Endothelial cell of umbilical vein (primary cell): ENCODE measurements at regions of chr12 and their contacts with region 1.

Region 1: DNA sequence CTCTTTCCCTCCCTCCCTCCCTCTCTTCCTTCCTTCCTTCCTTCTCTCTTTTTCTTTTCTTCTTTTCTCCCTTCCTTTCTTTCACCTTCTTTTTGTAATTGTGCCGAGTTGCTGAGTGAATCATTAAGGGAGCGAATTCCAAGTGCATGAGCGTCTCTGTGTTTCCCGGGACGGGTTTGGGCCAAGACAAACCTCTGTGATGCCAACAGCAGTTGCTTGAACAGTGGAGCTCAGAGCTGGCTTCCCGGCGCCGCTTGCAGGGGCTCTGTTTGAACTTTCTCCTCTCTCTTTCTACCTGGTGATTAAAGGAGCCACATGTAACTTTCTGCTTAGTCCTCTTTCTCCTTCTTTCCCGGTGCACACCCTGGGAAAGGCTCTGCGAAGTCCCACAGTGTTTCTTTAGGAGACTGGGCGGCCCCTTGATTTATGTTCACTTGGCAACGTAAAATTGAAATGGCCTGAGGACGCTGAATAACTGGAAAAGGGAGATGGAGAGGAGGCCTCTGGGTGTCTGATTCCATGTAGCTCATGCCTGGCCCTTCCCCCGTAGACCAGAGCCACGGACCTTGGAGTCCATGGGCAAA is 33.7 kb upstream of the MAP1LC3B2 start:
- DNase-seq: peak; percentile 74
- H3K4me3 ChIP-seq: no peak overlapping the region
- H3K27ac ChIP-seq: peak overlapping the region; percentile 68
- H3K4me1 ChIP-seq: peaks cover 22% of the 10 kb centered on the region
- H3K27me3 ChIP-seq: no peaks in the 10 kb centered on the region
- CTCF ChIP-seq: no peak
- POLR2A ChIP-seq: no peak

Region 2: GRCh38 chr12:116142936-116143898 is 382.3 kb before region 1 on chr12:
- CTCF ChIA-PET with region 1: no interaction called
- POLR2A ChIA-PET with region 1: no interaction called
- dilution Hi-C with region 1: no loop called
- intact Hi-C with region 1: loop called (anchors 5 kb)
- DNase-seq: peak; percentile 97
- H3K4me3 ChIP-seq: peak overlapping the region in 1 of 3 experiments; percentile 18
- H3K27ac ChIP-seq: peak overlapping the region; percentile 99
- H3K4me1 ChIP-seq: peaks cover 28% of the 10 kb centered on the region
- H3K27me3 ChIP-seq: no peaks in the 10 kb centered on the region
- CTCF ChIP-seq: no peak
- POLR2A ChIP-seq: peak; percentile 25

Region 3: DNA sequence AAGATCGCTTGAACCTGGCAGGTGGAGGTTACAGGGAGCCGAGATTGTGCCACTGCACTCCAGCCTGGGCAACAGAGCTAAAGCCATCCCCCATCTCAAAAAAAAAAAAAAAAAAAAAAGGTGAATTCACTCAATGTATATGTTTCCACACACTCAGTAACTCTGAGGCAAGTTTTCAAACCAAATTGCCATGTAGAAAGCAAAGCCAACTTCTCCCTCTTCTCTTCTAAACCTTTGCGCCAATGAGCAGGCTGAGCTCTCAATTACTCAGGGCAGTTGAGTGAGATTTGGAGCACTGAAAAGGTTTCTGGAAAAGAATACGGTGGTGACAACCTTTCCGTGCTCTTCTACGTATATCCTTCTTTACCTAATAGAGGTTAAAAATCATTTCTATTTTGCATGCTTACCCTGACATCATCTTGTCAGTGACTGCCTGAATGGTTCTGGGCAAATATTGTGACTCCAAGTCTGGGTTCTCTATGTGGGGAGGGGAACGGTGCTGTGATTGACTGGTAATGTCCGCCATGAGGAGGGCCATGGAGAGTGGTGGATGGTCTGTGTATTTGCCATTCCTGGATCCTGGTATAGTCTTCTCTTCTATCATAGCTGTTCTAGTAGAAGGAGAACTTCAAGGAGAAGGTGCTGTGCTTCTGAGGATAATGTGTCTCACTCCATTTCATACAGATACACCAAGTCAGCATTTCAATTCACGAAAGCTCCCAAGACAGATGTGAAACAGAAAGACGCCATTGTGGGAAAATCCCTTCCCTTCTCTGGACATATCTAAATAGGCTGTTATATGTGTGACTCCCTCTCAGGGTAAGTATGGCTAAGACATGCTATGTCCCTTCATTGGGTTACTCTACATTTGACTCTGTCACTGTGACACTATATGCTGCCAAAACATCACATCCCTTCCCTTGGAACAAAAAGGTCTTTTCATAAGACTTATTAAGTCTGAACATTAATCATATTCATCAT is 201.8 kb before region 1 on chr12:
- CTCF ChIA-PET with region 1: no interaction called
- POLR2A ChIA-PET with region 1: no interaction called
- dilution Hi-C with region 1: no loop called
- intact Hi-C with region 1: loop called (anchors 1 kb)
- DNase-seq: no peak
- H3K4me3 ChIP-seq: no peak overlapping the region
- H3K27ac ChIP-seq: no peak overlapping the region
- H3K4me1 ChIP-seq: peaks cover 8% of the 10 kb centered on the region
- H3K27me3 ChIP-seq: no peaks in the 10 kb centered on the region
- CTCF ChIP-seq: no peak
- POLR2A ChIP-seq: no peak

Region 4: DNA sequence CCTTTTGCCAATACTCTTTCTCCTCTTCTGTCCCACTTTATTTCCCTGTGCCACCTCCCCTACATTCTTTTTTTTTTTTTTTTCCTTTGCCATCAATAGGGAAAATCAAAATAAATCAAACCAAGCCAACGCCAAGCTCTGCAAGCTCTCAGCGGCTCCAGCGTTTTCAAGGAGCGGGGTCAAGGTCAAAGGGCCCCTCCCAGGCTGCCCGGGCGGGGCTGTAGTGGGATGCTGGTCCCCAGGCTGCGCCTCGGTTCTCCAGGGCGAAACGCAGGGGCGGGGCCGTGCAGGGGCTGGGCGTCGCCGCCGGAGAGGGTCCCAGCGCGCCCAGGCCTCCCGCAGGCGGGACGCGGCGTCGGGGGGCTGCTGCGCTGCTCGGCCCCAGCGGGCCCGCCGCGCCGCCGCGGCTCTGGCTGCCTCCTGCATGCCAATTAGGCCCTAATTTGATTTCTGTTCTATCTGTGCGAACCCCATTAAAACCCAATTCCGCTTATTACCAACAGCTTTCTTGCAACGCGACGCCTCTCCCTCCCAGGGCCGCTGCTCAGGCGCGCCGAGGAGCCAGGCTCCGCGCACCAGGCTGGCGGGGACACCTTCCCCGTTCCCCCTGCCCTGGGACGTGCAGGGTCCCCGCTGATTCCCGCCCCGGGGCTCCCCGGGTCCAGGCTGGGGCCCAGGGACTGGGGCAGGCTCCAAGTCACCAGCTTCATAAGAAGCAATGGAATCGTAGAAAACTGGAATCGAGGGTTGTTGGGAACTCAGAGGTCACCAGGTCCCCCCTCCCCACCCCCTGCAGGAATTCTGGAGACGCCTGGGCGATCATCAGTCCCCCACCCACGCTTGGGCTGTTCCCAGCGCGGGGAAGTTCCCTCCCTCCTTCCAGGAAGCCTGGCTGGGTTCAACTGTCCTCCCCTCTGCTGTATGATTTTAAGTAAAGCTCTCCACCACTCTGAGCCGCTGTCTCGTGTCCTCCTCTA is 17.1 kb before region 1 on chr12:
- CTCF ChIA-PET with region 1: interaction called, 3 read pairs
- POLR2A ChIA-PET with region 1: no interaction called
- dilution Hi-C with region 1: no loop called
- intact Hi-C with region 1: loop called (anchors 2 kb)
- DNase-seq: no peak
- H3K4me3 ChIP-seq: peak overlapping the region in 2 of 3 experiments; percentile 5 to 36
- H3K27ac ChIP-seq: no peak overlapping the region
- H3K4me1 ChIP-seq: no peaks in the 10 kb centered on the region
- H3K27me3 ChIP-seq: peaks cover 0 to 4% of the 10 kb centered on the region in 2 experiments
- CTCF ChIP-seq: no peak
- POLR2A ChIP-seq: no peak